Gastrocnemius medialis (tissue), 4 donors: ENCODE measurements at regions of chr2 and their contacts with region 1.

Region 1: DNA sequence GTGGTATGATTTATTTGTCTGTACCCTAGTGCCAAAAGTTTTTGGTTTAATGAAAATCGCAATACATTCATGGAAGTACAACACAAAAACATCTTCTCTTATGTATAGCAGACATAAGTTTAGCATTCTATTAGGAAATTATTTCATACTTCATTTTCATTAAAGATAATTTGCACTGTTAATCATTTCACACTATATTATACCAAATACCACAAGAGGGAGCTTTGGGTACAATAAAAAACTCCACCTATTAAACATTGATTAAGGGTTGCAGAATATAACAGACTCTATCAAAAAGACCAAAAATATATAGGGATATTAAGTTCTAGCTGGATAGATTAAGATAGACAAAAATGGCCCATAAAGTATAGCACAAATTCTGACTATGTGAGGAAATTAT is 79.0 kb downstream of the SLC66A3 start:
- DNase-seq: no peak
- ATAC-seq: peak; percentile 28 to 47
- H3K4me3 ChIP-seq: no peak overlapping the region
- H3K27ac ChIP-seq: peak overlapping the region in 1 of 4 donors; percentile 48
- H3K4me1 ChIP-seq: peaks cover 24 to 33% of the 10 kb centered on the region in 2 donors
- H3K27me3 ChIP-seq: no peaks in the 10 kb centered on the region
- CTCF ChIP-seq: peak; percentile 46 to 60 (median 57)
- POLR2A ChIP-seq: no peak

Region 2: GRCh38 chr2:10700078-10700803 is 534.1 kb before region 1 on chr2:
- in situ Hi-C with region 1: no loop called
- intact Hi-C with region 1: no loop called
- DNase-seq: no peak
- ATAC-seq: no peak
- H3K4me3 ChIP-seq: no peak overlapping the region
- H3K27ac ChIP-seq: no peak overlapping the region
- H3K4me1 ChIP-seq: no peaks in the 10 kb centered on the region
- H3K27me3 ChIP-seq: peaks cover 0 to 5% (median 0%) of the 10 kb centered on the region in 3 donors
- CTCF ChIP-seq: no peak
- POLR2A ChIP-seq: no peak

Region 3: GRCh38 chr2:11446733-11447248 is 212.5 kb after region 1 on chr2:
- in situ Hi-C with region 1: loop called in 2 of 4 experiments (anchors 10 kb)
- intact Hi-C with region 1: loop called (anchors 1 kb)
- DNase-seq: peak; percentile 21 to 54
- ATAC-seq: peak; percentile 73 to 84
- H3K4me3 ChIP-seq: no peak overlapping the region
- H3K27ac ChIP-seq: peak overlapping the region in 3 of 4 donors; percentile 13 to 55 (median 51)
- H3K4me1 ChIP-seq: no peaks in the 10 kb centered on the region
- H3K27me3 ChIP-seq: no peaks in the 10 kb centered on the region
- CTCF ChIP-seq: peak; percentile 74 to 91 (median 87)
- POLR2A ChIP-seq: no peak